ENCODE measurements at regions of chr2 and their contacts with region 1.

Region 1: DNA sequence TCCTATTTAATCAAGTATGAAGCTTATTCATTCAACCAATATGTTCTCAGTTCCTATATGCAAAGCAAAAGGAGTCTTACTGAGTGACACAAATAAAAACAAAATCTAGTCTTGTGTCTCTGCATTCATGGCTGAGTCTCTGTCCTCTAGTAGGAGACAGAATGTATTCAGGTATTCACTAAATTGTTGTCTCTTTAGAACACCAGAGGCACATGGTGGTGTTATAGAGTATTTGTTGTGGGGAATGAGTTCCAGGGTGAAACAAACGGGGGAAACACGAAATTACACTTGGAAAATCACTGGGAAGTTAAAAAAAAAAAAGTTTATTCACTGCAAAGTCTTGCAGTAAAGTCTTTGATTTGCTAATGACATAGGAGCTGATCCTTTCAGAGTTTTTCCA is 131.7 kb upstream of the FSHR start:
- DNase-seq: no peak
- ATAC-seq: no peak
- H3K4me3 ChIP-seq: no peak overlapping the region
- H3K27ac ChIP-seq: no peak overlapping the region
- H3K4me1 ChIP-seq: peaks cover 0 to 21% (median 3%) of the 10 kb centered on the region in 12 donors
- H3K27me3 ChIP-seq: no peaks in the 10 kb centered on the region
- CTCF ChIP-seq: no peak
- POLR2A ChIP-seq: no peak

Region 2: DNA sequence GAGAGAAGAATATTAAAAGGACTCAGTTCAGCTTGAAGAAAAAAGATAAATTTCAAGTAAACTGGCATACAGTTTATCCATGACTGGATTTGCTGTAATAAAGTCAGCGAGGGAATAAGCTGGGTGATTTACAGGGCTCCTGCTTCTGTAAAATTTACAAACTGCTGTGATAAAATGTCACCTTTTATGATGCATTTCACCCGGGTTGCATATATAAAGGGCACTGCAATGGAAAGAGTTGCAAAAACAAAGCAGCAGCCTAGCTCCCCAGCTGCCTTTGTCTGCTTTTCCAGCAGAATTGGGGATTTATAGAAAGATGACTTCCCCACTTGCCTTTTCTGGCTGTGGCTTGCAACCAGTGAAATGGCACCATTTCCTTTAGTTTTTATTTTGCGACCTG is 398.0 kb before region 1 on chr2:
- intact Hi-C with region 1: no loop called
- DNase-seq: no peak
- ATAC-seq: no peak
- H3K4me3 ChIP-seq: no peak overlapping the region
- H3K27ac ChIP-seq: no peak overlapping the region
- H3K4me1 ChIP-seq: no peaks in the 10 kb centered on the region
- H3K27me3 ChIP-seq: peaks cover 0 to 7% (median 0%) of the 10 kb centered on the region in 9 donors
- CTCF ChIP-seq: no peak
- POLR2A ChIP-seq: no peak

Region 3: GRCh38 chr2:49306925-49307324 is 20.9 kb after region 1 on chr2:
- intact Hi-C with region 1: loop called in 1 of 10 experiments (anchors 2 kb)
- DNase-seq: no peak
- ATAC-seq: peak in 1 of 4 donors; percentile 45
- H3K4me3 ChIP-seq: no peak overlapping the region
- H3K27ac ChIP-seq: no peak overlapping the region
- H3K4me1 ChIP-seq: no peaks in the 10 kb centered on the region
- H3K27me3 ChIP-seq: no peaks in the 10 kb centered on the region
- CTCF ChIP-seq: no peak
- POLR2A ChIP-seq: no peak

Region 4: DNA sequence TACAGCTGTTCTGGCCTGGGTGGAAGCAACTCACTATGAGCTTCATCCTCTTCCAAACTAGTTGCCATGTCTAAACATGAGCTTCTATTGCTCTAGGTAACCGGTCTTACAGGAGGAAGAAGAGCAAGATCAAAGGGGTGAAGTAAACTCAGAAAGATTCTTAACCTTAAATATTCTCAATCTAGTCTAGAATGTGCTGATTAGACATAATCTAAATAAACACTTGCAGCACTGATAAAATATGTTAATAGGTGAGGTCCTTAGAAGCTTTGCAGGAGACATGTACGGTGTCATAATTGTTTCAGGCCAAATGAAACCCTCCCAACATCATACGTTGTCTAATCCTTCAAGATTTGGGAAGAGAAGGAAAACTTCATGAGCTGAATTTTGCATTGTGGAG is 299.9 kb after region 1 on chr2:
- intact Hi-C with region 1: no loop called
- DNase-seq: no peak
- ATAC-seq: no peak
- H3K4me3 ChIP-seq: no peak overlapping the region
- H3K27ac ChIP-seq: no peak overlapping the region
- H3K4me1 ChIP-seq: peaks cover 0 to 6% (median 0%) of the 10 kb centered on the region in 12 donors
- H3K27me3 ChIP-seq: no peaks in the 10 kb centered on the region
- CTCF ChIP-seq: no peak
- POLR2A ChIP-seq: no peak

Measured in heart left ventricle (tissue), 16 donors.